HCT116 (cell line): ENCODE measurements at regions of chr14 and their contacts with region 1.

Region 1: DNA sequence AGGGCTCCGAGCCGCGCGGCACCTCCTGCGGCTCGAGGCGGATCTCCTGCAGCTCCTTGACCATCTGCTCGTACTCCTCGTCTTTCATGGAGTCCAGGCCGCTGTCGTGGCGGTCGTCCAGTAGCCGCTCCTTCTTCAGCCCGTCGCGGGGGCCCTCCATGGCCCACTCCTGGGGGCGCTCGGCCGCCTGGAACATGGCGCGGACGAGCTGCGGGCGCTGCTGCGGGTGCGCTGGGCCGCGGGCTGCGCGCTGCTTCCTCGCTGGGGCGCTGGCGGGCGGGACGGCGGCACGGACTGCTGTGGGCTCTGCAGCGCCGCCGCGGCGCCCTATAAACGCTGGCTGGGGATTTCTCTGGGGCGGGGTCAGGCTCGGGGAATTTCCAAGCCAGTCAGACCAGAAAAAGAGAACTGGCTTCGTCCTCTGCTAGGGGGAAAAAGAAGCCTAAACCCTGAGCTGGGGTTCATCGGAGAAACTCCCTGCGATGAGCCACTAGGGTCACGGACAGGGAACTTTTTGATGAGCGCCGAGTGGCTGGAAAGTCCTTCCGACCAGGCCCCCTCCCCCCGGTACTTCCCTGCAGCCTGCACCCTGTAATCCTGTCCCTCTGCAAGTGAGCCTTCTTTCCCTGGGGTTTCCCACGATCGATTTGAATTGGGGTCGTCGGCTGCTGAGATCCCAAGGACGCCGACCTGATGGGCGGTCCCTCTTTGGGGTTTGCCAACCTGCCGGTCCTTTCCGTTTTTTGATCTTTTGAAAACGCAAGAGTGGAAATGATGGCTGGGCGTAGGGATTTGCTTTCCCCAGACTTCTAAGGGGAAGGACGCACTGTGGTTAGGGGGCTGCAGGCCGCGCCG is at the start of gene NFKBIA:
- DNase-seq: peak; percentile 52
- ATAC-seq: peak; percentile 84
- H3K4me3 ChIP-seq: peak within 1 kb of the TSS; percentile 77 to 92
- H3K27ac ChIP-seq: peak within 1 kb of the TSS; percentile 98
- H3K4me1 ChIP-seq: peaks cover 24 to 25% of the 10 kb centered on the region in 2 experiments
- H3K27me3 ChIP-seq: no peaks in the 10 kb centered on the region
- CTCF ChIP-seq: peak; percentile 19 to 36 (median 22); a peak in 3 of 6 replicates
- POLR2A ChIP-seq: peak; percentile 93
- RAD21 ChIP-seq: peak; percentile 43
- total RNA-seq, gene NFKBIA: 42.6 TPM

Region 2: DNA sequence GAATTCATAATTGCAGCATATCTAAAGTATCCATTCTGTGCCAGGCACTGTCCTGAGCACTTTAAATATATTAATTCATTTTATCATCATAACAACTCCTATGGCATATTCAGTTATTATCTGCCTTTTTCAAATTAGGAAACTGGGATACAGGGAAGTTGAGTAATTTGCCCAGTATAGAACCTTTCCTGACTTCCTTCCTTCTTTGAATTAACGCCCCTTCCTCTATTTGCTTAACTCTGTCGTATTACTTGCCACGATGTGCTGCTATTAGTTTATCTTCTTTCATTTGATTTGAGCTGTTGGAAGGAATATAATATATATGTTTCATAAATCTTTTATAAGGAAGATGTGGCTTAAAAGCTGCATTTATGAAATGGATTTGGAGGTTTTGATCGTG is 384.0 kb before region 1 on chr14:
- CTCF ChIA-PET with region 1: no interaction called
- POLR2A ChIA-PET with region 1: no interaction called
- RAD21 ChIA-PET with region 1: no interaction called
- intact Hi-C with region 1: no loop called
- DNase-seq: no peak
- ATAC-seq: no peak
- H3K4me3 ChIP-seq: no peak overlapping the region
- H3K27ac ChIP-seq: no peak overlapping the region
- H3K4me1 ChIP-seq: no peaks in the 10 kb centered on the region
- H3K27me3 ChIP-seq: no peaks in the 10 kb centered on the region
- CTCF ChIP-seq: no peak
- POLR2A ChIP-seq: no peak
- RAD21 ChIP-seq: no peak

Region 3: GRCh38 chr14:35046048-35046741 is 358.5 kb before region 1 on chr14 and contains the start of gene FAM177A1:
- CTCF ChIA-PET with region 1: no interaction called
- POLR2A ChIA-PET with region 1: no interaction called
- RAD21 ChIA-PET with region 1: no interaction called
- intact Hi-C with region 1: loop called (anchors 5 kb)
- DNase-seq: peak; percentile 92
- ATAC-seq: peak; percentile 97
- H3K4me3 ChIP-seq: peak within 1 kb of the TSS; percentile 81 to 92
- H3K27ac ChIP-seq: peak within 1 kb of the TSS; percentile 95
- H3K4me1 ChIP-seq: peaks cover 10 to 19% of the 10 kb centered on the region in 2 experiments; a peak in 3 of 4 replicates
- H3K27me3 ChIP-seq: no peaks in the 10 kb centered on the region
- CTCF ChIP-seq: no peak
- POLR2A ChIP-seq: peak; percentile 88
- RAD21 ChIP-seq: no peak
- total RNA-seq, gene FAM177A1: 46.2 TPM

Region 4: GRCh38 chr14:35215110-35215876 is 189.4 kb before region 1 on chr14:
- CTCF ChIA-PET with region 1: interaction called, 14 read pairs
- POLR2A ChIA-PET with region 1: interaction called, 4 read pairs
- RAD21 ChIA-PET with region 1: interaction called, 4 to 5 read pairs
- intact Hi-C with region 1: no loop called
- DNase-seq: peak; percentile 38
- ATAC-seq: peak; percentile 73
- H3K4me3 ChIP-seq: no peak overlapping the region
- H3K27ac ChIP-seq: no peak overlapping the region
- H3K4me1 ChIP-seq: peaks cover 22 to 23% of the 10 kb centered on the region in 2 experiments
- H3K27me3 ChIP-seq: no peaks in the 10 kb centered on the region
- CTCF ChIP-seq: peak; percentile 35 to 66 (median 48); a peak in 5 of 6 replicates
- POLR2A ChIP-seq: no peak
- RAD21 ChIP-seq: peak; percentile 75

Region 5: GRCh38 chr14:35292051-35292769 is 112.5 kb before region 1 on chr14 and contains the start of gene PSMA6:
- CTCF ChIA-PET with region 1: interaction called, 3 read pairs
- POLR2A ChIA-PET with region 1: interaction called, 10 read pairs
- RAD21 ChIA-PET with region 1: interaction called, 3 to 7 read pairs
- intact Hi-C with region 1: loop called (anchors 2 kb)
- DNase-seq: peak; percentile 98
- ATAC-seq: peak; percentile 97
- H3K4me3 ChIP-seq: peak within 1 kb of the TSS; percentile 88 to 99
- H3K27ac ChIP-seq: peak within 1 kb of the TSS; percentile 79
- H3K4me1 ChIP-seq: peaks cover 9 to 13% of the 10 kb centered on the region in 2 experiments
- H3K27me3 ChIP-seq: no peaks in the 10 kb centered on the region
- CTCF ChIP-seq: no peak
- POLR2A ChIP-seq: peak; percentile 79
- RAD21 ChIP-seq: 0 out of 2 replicates have a peak, but pooled peaks have one; percentile 6
- total RNA-seq, gene PSMA6: 194 TPM

Region 6: DNA sequence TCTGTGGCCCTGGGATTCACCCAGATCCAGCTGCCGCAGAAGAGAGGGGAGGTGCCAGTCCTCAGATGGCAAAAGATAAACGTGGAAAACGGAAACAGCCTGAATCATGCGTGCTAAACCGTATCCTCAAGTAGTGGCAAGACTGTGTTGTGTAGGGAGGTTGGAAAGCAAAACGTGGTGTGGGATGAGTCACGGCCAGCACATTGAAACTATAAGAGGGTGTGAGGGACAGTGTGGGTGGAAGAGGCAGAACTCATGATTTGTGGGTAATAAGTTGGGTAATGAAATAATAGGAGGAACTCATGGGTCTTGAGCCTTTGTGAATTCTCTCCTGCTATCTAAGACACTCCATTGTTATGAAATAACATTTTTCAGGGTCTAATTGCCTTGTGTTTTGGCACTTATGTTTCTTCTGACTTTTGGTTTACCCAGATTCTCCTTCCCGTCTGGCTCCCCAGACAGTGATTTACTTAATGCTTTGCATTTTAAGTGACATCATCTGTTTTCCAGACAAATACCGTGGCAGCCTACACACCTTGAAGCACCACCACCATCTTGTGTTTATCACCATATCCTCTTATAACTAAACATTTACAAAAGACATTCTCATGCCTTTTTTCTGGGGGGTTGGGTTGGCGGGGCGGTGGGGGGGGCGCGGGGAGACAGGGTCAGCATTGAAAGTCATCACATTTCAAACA is 834.1 kb after region 1 on chr14:
- CTCF ChIA-PET with region 1: no interaction called
- POLR2A ChIA-PET with region 1: no interaction called
- RAD21 ChIA-PET with region 1: no interaction called
- intact Hi-C with region 1: no loop called
- DNase-seq: no peak
- ATAC-seq: no peak
- H3K4me3 ChIP-seq: no peak overlapping the region
- H3K27ac ChIP-seq: no peak overlapping the region
- H3K4me1 ChIP-seq: no peaks in the 10 kb centered on the region
- H3K27me3 ChIP-seq: no peaks in the 10 kb centered on the region
- CTCF ChIP-seq: no peak
- POLR2A ChIP-seq: no peak
- RAD21 ChIP-seq: no peak